ENCODE measurements at regions of chr19 and their contacts with region 1.

Region 1: DNA sequence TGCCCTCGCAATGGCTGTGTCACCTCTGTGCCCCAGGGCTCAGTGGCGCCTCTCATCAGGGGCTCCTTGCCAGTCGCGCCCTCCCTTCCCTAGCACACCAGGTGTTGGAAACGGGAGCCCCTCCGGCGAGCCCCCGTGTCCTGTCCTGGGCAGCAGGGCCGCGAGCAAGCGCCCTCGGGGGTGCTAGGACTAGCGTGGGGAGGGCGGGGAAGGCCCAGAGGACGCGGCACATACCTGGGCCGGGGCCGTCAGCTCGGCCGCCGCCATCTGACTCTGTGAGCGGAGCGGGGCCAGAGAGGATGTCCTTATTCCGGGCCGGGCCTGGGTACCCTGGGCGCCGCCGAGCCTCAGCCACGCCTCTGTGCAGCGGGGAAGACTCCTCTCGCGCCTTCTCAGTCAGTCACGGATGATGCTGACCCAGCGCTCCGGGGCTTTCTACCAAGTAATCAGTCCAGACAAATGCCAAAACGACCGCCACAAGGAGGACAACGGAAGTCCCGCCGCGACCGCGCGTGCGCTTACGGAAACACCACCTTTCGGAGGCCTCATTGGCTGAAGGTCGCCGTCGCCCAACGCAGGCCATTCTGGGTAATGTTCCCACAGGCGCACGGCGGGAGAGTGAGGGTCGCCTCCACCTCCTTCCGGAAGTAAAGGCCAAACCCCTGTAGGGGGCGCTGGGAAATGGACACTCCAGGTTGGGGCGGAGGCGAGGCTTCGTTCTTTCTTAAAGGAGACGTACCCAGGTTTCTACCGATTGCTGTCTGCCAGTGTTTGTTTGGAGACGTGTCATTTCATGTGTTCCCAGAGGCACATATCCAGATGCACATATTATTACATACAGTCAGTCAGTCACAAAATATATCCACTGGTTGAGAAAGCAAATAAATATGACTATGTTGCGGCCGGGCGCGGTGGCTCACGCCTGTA is at the start of gene ZNF256:
- DNase-seq: peak; percentile 93
- ATAC-seq: peak; percentile 99
- H3K4me3 ChIP-seq: peak within 1 kb of the TSS; percentile 83
- H3K27ac ChIP-seq: peak within 1 kb of the TSS; percentile 18
- H3K4me1 ChIP-seq: peaks cover 4% of the 10 kb centered on the region; the same call in 1 of the 2 replicates
- H3K27me3 ChIP-seq: no peaks in the 10 kb centered on the region
- CTCF ChIP-seq: peak; percentile 71
- POLR2A ChIP-seq: peak; percentile 37; the same call in 1 of the 2 replicates
- RAD21 ChIP-seq: peak; percentile 26
- total RNA-seq, gene ZNF256: 6.1 and 7.0 TPM in 2 replicates

Region 2: GRCh38 chr19:57708641-57709361 is 238.7 kb before region 1 on chr19 and contains the start of gene ZNF154:
- CTCF ChIA-PET with region 1: no interaction called
- POLR2A ChIA-PET with region 1: interaction called, 10 read pairs
- dilution Hi-C with region 1: no loop called
- in situ Hi-C with region 1: no loop called
- intact Hi-C with region 1: no loop called
- DNase-seq: peak; percentile 67
- ATAC-seq: peak; percentile 91
- H3K4me3 ChIP-seq: peak within 1 kb of the TSS; percentile 81
- H3K27ac ChIP-seq: peak within 1 kb of the TSS; percentile 79
- H3K4me1 ChIP-seq: peaks cover 7% of the 10 kb centered on the region
- H3K27me3 ChIP-seq: no peaks in the 10 kb centered on the region
- CTCF ChIP-seq: no peak
- POLR2A ChIP-seq: no peak; the same call in 1 of the 2 replicates
- RAD21 ChIP-seq: no peak
- total RNA-seq, gene ZNF154: 1.9 and 2.9 TPM in 2 replicates